Uterus (tissue), 4 donors: ENCODE measurements at regions of chr14 and their contacts with region 1.

Region 1: GRCh38 chr14:73568381-73568781 is 632 bp upstream of the ACOT2 start:
- DNase-seq: no peak
- H3K4me3 ChIP-seq: peak overlapping the region; percentile 47 to 67
- H3K27ac ChIP-seq: peak overlapping the region; percentile 94 to 96
- H3K4me1 ChIP-seq: peaks cover 0 to 17% of the 10 kb centered on the region in 2 donors
- H3K27me3 ChIP-seq: no peaks in the 10 kb centered on the region
- CTCF ChIP-seq: no peak
- POLR2A ChIP-seq: no peak

Region 2: GRCh38 chr14:73472185-73473114 is 95.9 kb before region 1 on chr14:
- intact Hi-C with region 1: no loop called
- DNase-seq: no peak
- H3K4me3 ChIP-seq: no peak overlapping the region
- H3K27ac ChIP-seq: no peak overlapping the region
- H3K4me1 ChIP-seq: no peaks in the 10 kb centered on the region
- H3K27me3 ChIP-seq: no peaks in the 10 kb centered on the region
- CTCF ChIP-seq: peak; percentile 57 to 89 (median 78)
- POLR2A ChIP-seq: no peak

Region 3: DNA sequence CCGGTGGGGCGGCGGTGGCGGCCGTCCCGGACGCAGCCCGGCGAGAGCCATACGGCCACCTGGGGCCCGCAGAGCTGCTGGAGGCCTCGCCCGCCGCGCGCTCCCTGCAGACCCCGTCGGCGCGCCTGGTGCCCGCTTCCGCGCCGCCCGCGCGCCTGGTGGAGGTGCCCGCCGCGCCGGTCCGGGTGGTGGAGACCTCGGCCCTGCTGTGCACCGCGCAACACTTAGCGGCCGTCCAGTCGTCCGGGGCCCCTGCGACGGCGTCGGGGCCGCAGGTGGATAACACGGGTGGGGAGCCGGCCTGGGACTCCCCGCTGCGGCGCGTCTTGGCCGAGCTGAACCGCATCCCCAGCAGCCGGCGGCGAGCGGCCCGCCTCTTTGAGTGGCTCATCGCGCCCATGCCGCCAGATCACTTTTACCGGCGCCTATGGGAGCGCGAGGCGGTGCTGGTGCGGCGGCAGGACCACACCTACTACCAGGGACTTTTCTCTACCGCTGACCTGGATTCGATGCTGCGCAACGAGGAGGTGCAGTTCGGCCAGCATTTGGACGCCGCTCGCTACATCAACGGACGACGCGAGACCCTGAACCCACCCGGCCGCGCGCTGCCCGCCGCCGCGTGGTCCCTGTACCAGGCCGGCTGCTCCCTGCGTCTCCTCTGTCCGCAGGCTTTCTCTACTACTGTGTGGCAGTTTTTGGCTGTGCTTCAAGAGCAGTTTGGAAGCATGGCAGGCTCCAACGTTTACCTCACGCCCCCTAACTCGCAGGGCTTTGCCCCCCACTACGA is 76.9 kb before region 1 on chr14:
- intact Hi-C with region 1: loop called (anchors 5 kb)
- DNase-seq: peak; percentile 48 to 55
- H3K4me3 ChIP-seq: peak overlapping the region; percentile 64 to 76
- H3K27ac ChIP-seq: peak overlapping the region; percentile 79 to 90
- H3K4me1 ChIP-seq: peaks cover 0 to 11% of the 10 kb centered on the region in 2 donors
- H3K27me3 ChIP-seq: no peaks in the 10 kb centered on the region
- CTCF ChIP-seq: no peak
- POLR2A ChIP-seq: peak; percentile 21 to 44

Region 4: GRCh38 chr14:73503648-73504047 is 64.7 kb before region 1 on chr14:
- intact Hi-C with region 1: loop called (anchors 5 kb)
- DNase-seq: no peak
- H3K4me3 ChIP-seq: no peak overlapping the region
- H3K27ac ChIP-seq: no peak overlapping the region
- H3K4me1 ChIP-seq: no peaks in the 10 kb centered on the region
- H3K27me3 ChIP-seq: no peaks in the 10 kb centered on the region
- CTCF ChIP-seq: no peak
- POLR2A ChIP-seq: no peak

Region 5: DNA sequence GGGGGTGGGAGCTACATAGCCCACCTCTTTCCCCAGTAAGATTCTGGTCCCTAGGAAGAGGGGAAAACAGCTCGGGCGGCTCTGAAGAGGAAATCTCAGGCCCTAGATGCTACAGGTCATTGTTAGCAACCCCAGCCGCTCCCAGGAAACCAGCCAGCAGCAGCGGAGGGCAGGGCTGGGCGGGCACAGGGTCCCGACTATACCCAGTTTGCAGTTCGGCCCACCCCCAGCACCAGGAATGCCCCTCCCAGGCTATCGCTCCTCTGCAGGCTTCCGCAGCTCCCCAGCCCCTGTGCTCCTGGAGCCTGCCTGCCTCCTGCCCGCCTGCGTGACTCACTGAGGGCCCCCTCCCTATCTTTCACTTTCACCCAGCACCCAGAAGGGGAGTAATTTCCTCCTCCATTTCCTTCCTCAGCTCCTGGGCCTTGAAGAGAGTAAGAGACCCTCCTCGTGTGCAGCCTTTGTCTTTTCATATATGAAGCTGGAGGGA is 173.1 kb after region 1 on chr14:
- intact Hi-C with region 1: no loop called
- DNase-seq: peak; percentile 66 to 78
- H3K4me3 ChIP-seq: peak overlapping the region; percentile 2 to 38
- H3K27ac ChIP-seq: peak overlapping the region; percentile 89 to 92
- H3K4me1 ChIP-seq: peaks cover 53 to 67% of the 10 kb centered on the region in 2 donors
- H3K27me3 ChIP-seq: no peaks in the 10 kb centered on the region
- CTCF ChIP-seq: peak in 1 of 4 experiments; percentile 25
- POLR2A ChIP-seq: no peak

Region 6: GRCh38 chr14:73997108-73997943 is 428.9 kb after region 1 on chr14:
- intact Hi-C with region 1: no loop called
- DNase-seq: no peak
- H3K4me3 ChIP-seq: no peak overlapping the region
- H3K27ac ChIP-seq: no peak overlapping the region
- H3K4me1 ChIP-seq: no peaks in the 10 kb centered on the region
- H3K27me3 ChIP-seq: no peaks in the 10 kb centered on the region
- CTCF ChIP-seq: no peak
- POLR2A ChIP-seq: no peak